H1 (cell line): ENCODE measurements at regions of chr10 and their contacts with region 1.

Region 1: GRCh38 chr10:71893920-71894319 is 42.9 kb upstream of the PSAP start:
- DNase-seq: no peak
- H3K4me3 ChIP-seq: no peak overlapping the region
- H3K27ac ChIP-seq: no peak overlapping the region
- H3K4me1 ChIP-seq: no peaks in the 10 kb centered on the region
- H3K27me3 ChIP-seq: peaks cover 4 to 16% (median 12%) of the 10 kb centered on the region in 4 experiments
- CTCF ChIP-seq: no peak
- EP300 ChIP-seq: no peak
- POLR2A ChIP-seq: no peak
- RAD21 ChIP-seq: no peak

Region 2: DNA sequence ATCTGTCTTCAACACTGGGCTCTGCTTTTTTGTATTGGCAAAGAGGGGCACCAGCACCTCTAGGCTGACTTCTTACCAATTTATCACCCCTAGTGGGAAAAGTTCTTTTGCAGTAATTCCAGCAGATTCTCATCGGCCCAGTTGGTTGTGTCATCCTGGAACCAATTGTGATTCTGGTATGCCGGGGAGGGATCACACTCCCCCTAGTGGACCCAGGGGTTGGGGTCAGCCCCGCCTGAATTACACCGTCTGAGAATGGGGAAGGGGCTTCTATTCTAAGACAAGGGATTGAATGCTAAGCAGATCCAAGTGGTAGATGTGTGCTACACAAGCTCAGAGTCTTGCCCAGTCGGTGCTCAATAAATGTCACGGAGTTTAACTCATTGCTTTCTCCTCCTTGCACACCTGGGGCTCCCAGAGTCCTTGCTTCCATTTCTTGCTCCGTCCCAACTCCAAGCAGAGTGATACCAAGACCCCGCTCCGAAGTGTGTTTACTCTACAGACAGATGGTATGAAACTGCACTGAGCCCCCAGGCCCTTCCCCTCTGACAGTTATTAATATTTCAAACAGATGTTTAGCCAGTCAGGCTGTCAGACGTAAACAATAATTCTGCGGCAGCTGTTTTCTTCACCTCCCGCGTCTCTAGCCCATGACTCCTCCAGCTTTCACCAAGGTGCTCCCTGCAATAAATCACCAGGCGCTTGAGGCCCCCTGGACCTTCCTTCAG is 246.2 kb before region 1 on chr10:
- CTCF ChIA-PET with region 1: no interaction called
- POLR2A ChIA-PET with region 1: no interaction called
- DNase-seq: peak in 1 of 2 experiments; percentile 78
- H3K4me3 ChIP-seq: no peak overlapping the region
- H3K27ac ChIP-seq: no peak overlapping the region
- H3K4me1 ChIP-seq: peaks cover 10 to 14% (median 10%) of the 10 kb centered on the region in 4 experiments
- H3K27me3 ChIP-seq: no peaks in the 10 kb centered on the region
- CTCF ChIP-seq: peak; percentile 73 to 84 (median 83)
- EP300 ChIP-seq: no peak
- POLR2A ChIP-seq: no peak
- RAD21 ChIP-seq: peak; percentile 46 to 74

Region 3: GRCh38 chr10:71812016-71812912 is 81.7 kb before region 1 on chr10:
- CTCF ChIA-PET with region 1: interaction called, 16 read pairs
- POLR2A ChIA-PET with region 1: no interaction called
- DNase-seq: peak in 1 of 2 experiments; percentile 87
- H3K4me3 ChIP-seq: no peak overlapping the region
- H3K27ac ChIP-seq: no peak overlapping the region
- H3K4me1 ChIP-seq: peaks cover 0 to 3% (median 0%) of the 10 kb centered on the region in 4 experiments; a peak in 1 of 7 replicates
- H3K27me3 ChIP-seq: no peaks in the 10 kb centered on the region
- CTCF ChIP-seq: peak; percentile 71 to 82 (median 79)
- EP300 ChIP-seq: no peak
- POLR2A ChIP-seq: no peak
- RAD21 ChIP-seq: peak; percentile 83 to 88

Region 4: GRCh38 chr10:71873582-71874211 is 20.2 kb before region 1 on chr10:
- CTCF ChIA-PET with region 1: interaction called, 11 read pairs
- POLR2A ChIA-PET with region 1: no interaction called
- DNase-seq: no peak
- H3K4me3 ChIP-seq: no peak overlapping the region
- H3K27ac ChIP-seq: no peak overlapping the region
- H3K4me1 ChIP-seq: peaks cover 0 to 4% (median 0%) of the 10 kb centered on the region in 4 experiments; a peak in 3 of 7 replicates
- H3K27me3 ChIP-seq: no peaks in the 10 kb centered on the region
- CTCF ChIP-seq: no peak
- EP300 ChIP-seq: no peak
- POLR2A ChIP-seq: no peak
- RAD21 ChIP-seq: no peak

Region 5: GRCh38 chr10:72038458-72039001 is 144.6 kb after region 1 on chr10:
- CTCF ChIA-PET with region 1: interaction called, 26 read pairs
- POLR2A ChIA-PET with region 1: no interaction called
- DNase-seq: no peak
- H3K4me3 ChIP-seq: no peak overlapping the region
- H3K27ac ChIP-seq: no peak overlapping the region
- H3K4me1 ChIP-seq: peaks cover 0 to 4% (median 4%) of the 10 kb centered on the region in 4 experiments; a peak in 3 of 7 replicates
- H3K27me3 ChIP-seq: peaks cover 0 to 2% (median 0%) of the 10 kb centered on the region in 4 experiments; a peak in 1 of 7 replicates
- CTCF ChIP-seq: no peak
- EP300 ChIP-seq: no peak
- POLR2A ChIP-seq: no peak
- RAD21 ChIP-seq: no peak

Region 6: GRCh38 chr10:72069751-72070526 is 176.0 kb after region 1 on chr10:
- CTCF ChIA-PET with region 1: interaction called, 26 read pairs
- POLR2A ChIA-PET with region 1: no interaction called
- DNase-seq: peak in 1 of 2 experiments; percentile 67
- H3K4me3 ChIP-seq: no peak overlapping the region
- H3K27ac ChIP-seq: 0 out of 2 replicates have a peak overlapping the region, but pooled peaks have one; percentile 11
- H3K4me1 ChIP-seq: peaks cover 0 to 3% (median 0%) of the 10 kb centered on the region in 4 experiments; a peak in 2 of 7 replicates
- H3K27me3 ChIP-seq: no peaks in the 10 kb centered on the region
- CTCF ChIP-seq: peak; percentile 51 to 59 (median 59)
- EP300 ChIP-seq: no peak
- POLR2A ChIP-seq: no peak
- RAD21 ChIP-seq: peak; percentile 59 to 65